ENCODE measurements at regions of chr14 and their contacts with region 1.

Region 1: GRCh38 chr14:76386915-76387782 is 11.2 kb downstream of the ESRRB start:
- DNase-seq: peak; percentile 11
- H3K4me3 ChIP-seq: no peak overlapping the region
- H3K27ac ChIP-seq: no peak overlapping the region
- H3K27me3 ChIP-seq: peaks cover 18% of the 10 kb centered on the region
- CTCF ChIP-seq: peak; percentile 99

Region 2: DNA sequence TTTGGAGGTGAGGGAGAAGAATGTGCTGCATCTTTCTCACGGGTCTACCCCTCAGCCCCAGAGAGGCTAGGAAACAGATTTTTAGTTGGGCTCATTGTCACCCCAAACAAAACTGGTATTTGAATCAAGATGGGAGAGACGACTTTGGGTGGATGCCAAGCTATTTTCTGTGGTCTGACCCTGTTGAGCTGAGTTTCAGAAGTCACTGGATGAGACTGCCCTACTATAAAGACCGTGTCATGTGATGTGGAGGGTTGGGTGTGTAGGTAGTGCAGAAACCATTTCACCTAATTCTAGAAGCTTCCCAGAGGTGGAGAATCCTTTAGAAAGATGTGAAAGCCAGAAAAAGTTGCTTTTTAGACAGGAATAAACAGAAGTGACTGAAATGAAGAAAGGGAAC is 341.4 kb before region 1 on chr14:
- CTCF ChIA-PET with region 1: interaction called, 147 read pairs
- POLR2A ChIA-PET with region 1: no interaction called
- DNase-seq: no peak
- H3K4me3 ChIP-seq: no peak overlapping the region
- H3K27ac ChIP-seq: no peak overlapping the region
- H3K27me3 ChIP-seq: no peaks in the 10 kb centered on the region
- CTCF ChIP-seq: no peak

Region 3: GRCh38 chr14:76320486-76320885 is 66.7 kb before region 1 on chr14:
- CTCF ChIA-PET with region 1: no interaction called
- POLR2A ChIA-PET with region 1: no interaction called
- DNase-seq: no peak
- H3K4me3 ChIP-seq: no peak overlapping the region
- H3K27ac ChIP-seq: no peak overlapping the region
- H3K27me3 ChIP-seq: peaks cover 8% of the 10 kb centered on the region
- CTCF ChIP-seq: no peak

Region 4: DNA sequence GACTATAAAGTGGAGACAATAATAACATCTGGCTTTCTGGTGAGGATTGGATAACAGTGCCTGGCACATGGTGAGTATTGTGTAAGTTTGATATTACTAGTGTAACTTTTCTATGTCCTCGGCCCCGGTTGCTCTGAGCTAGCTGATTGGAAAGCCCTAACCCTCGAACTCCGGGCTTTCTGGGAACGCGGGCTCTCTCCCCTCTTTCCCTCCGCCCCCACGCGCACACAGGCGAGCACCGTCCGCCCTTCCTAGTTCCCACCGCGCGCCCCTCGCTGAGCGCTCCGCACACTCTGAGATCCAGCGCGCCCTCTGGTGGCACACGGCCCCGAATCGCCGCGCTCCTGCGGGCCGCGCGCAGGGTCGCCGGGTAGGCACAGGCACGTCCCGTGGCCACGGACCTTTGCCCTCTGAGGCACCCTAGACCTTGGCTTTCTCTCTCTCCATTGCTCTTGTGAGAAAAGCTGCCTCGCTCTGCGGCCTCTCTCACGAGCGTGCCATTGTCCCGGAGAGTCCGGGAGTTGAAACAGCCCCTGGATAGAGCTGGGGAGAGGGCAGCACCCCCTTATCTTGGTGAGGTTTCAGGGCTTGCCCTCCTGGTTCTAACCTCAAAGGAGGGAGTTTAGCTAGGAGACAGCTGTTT is 34.4 kb before region 1 on chr14:
- CTCF ChIA-PET with region 1: interaction called, 12 read pairs
- POLR2A ChIA-PET with region 1: no interaction called
- DNase-seq: no peak
- H3K4me3 ChIP-seq: peak overlapping the region; percentile 37
- H3K27ac ChIP-seq: no peak overlapping the region
- H3K27me3 ChIP-seq: peaks cover 6% of the 10 kb centered on the region
- CTCF ChIP-seq: peak; percentile 75

Region 5: DNA sequence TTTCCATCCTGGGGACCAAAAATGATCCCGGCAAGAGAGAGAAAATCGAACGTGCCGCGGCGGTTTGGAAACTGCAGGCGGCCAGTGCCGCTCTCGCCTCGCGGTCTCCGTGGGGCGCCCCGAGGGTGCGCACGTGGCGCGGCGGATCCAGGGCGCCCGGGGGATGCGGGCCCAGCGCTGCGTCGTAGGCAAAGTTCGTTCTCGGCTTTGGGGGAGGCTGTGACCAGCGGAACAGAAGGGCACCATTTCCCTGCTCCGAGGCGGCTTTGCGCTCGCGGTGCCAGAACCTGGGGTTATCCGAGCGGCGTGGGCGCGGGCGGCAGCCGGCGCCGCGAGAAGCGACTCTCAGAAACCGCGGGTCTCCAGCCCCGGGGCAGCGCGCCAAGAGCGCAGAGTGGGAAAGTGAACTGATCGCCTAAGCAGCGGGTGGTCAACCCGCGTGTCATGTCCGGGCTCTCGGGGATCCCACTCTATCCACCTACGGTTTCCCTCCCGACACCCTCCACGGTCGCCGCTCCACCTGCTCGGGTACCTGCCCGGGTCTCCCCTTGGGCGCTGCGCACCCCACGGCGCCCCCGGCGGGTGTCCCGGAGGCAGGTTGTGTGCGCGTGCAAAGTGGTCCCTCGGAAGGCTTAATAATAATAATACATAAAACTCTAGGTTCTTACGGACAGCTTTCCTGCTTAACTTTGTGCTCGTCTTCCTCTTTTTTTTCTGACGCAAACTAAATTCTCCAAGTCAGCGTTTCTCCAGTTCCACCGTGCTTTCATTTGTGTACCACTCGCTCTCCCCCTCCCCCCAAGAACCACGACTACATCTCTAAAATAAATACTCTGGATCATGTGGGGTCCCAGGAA is 10.0 kb before region 1 on chr14:
- CTCF ChIA-PET with region 1: interaction called, 10 read pairs
- POLR2A ChIA-PET with region 1: no interaction called
- DNase-seq: no peak
- H3K4me3 ChIP-seq: no peak overlapping the region
- H3K27ac ChIP-seq: no peak overlapping the region
- H3K27me3 ChIP-seq: peaks cover 67% of the 10 kb centered on the region
- CTCF ChIP-seq: no peak

Region 6: GRCh38 chr14:76792416-76792815 is 405.3 kb after region 1 on chr14:
- CTCF ChIA-PET with region 1: no interaction called
- POLR2A ChIA-PET with region 1: no interaction called
- DNase-seq: no peak
- H3K4me3 ChIP-seq: no peak overlapping the region
- H3K27ac ChIP-seq: no peak overlapping the region
- H3K27me3 ChIP-seq: no peaks in the 10 kb centered on the region
- CTCF ChIP-seq: no peak